Caco-2 (cell line): ENCODE measurements at regions of chr2 and their contacts with region 1.

Region 1: DNA sequence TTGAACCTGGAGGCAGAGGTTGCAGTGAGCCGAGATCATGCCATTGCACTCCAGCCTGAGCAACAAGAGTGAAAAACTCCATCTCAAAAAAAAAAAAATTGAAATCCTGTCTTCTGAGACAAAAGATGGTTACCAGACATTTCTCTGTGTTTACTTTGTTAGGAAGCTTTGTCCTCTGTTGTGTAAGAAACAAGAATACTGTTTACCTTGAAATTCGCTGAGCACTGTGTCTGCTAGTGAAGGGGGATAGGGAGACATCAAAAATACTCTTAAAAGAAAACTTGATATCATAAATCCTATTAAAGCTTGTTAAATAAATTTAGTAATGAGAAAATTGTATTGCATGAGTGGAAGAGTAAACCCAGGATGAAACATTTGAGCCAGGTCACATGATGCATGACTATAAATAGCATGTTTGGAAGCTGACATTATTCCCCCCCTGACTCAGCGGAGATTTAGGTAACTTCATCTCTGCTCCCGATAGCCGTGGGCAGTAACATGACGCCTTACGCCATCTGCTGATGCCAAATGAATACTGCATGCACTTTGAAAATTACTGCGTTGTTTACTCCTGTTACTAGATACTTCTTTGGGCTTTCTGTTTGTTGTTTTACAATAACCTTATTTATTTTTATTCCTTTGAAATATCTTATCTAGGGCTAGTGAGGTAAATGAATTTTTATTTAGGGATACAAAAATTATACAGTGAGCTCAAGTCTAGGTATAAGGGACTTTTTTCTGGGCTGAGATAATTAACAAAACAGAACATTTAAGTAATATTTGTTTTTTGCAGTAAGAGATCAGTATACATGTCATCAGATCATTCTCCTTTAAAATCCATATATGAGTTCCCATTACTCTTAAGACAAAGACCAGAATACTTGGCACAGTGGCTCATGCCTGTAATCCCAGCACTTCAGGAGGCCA is 134.9 kb downstream of the MAP3K20 start:
- DNase-seq: peak; percentile 64 to 72
- H3K4me3 ChIP-seq: no peak overlapping the region
- H3K4me3 Mint-ChIP-seq: no peak overlapping the region
- H3K27ac Mint-ChIP-seq: no peak overlapping the region
- H3K4me1 ChIP-seq: no peaks in the 10 kb centered on the region; the same call in 1 of the 2 replicates
- H3K4me1 Mint-ChIP-seq: no peaks in the 10 kb centered on the region
- H3K27me3 ChIP-seq: no peaks in the 10 kb centered on the region
- H3K27me3 Mint-ChIP-seq: no peaks in the 10 kb centered on the region
- CTCF ChIP-seq: peak; percentile 81 to 91

Region 2: DNA sequence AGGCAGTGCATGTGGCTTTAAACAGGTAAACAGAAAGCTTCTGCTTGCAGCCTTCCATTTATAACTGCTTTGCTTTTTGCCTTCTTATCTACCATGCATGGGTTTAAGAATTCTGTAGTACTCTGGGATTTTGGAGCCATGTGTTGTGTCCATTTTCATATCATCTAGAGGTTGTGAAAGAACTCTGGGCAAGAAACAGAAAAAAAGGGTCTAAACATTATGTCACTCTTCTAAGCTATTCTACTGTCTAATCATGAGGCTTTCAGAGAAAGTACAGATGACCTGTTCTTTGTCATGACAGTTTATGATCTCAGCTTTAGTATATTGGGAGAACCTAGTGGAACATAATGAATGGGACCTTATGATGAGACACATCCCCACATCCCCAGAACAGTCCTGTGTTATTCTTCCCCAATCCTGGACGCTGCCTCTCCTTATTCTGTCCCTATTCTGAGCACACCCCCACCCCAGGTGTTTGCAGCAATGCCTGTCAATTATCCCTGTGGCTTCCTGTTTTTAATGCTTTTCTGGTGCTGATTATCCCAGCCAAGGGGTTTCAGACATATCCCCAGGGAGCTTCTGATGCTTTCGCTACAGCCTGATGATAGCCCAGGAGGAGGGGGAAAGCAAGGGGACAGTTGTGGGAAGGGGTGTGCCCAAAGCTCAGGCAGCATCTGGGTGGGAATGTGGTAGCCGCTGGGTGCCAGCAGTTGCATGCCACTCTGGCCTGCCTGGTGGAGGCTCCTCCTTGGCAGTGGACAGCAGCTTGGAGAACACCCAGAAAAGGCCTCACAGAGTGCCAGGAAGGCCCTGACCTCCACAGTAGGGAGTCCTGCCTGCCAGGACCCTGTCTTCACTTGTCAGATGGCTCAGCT is 304.4 kb before region 1 on chr2:
- CTCF ChIA-PET with region 1: no interaction called
- POLR2A ChIA-PET with region 1: no interaction called
- intact Hi-C with region 1: no loop called
- DNase-seq: no peak
- H3K4me3 ChIP-seq: no peak overlapping the region
- H3K4me3 Mint-ChIP-seq: no peak overlapping the region
- H3K27ac Mint-ChIP-seq: no peak overlapping the region
- H3K4me1 ChIP-seq: no peaks in the 10 kb centered on the region
- H3K4me1 Mint-ChIP-seq: no peaks in the 10 kb centered on the region
- H3K27me3 ChIP-seq: no peaks in the 10 kb centered on the region; the same call in 1 of the 2 replicates
- H3K27me3 Mint-ChIP-seq: peaks cover 9% of the 10 kb centered on the region
- CTCF ChIP-seq: no peak

Region 3: GRCh38 chr2:172972005-172972619 is 238.4 kb before region 1 on chr2:
- CTCF ChIA-PET with region 1: no interaction called
- POLR2A ChIA-PET with region 1: no interaction called
- intact Hi-C with region 1: loop called (anchors 2 kb)
- DNase-seq: peak; percentile 46 to 63
- H3K4me3 ChIP-seq: no peak overlapping the region
- H3K4me3 Mint-ChIP-seq: no peak overlapping the region
- H3K27ac Mint-ChIP-seq: no peak overlapping the region
- H3K4me1 ChIP-seq: 0 out of 2 replicates have a peak, but pooled peaks cover 3% of the 10 kb centered on the region
- H3K4me1 Mint-ChIP-seq: peaks cover 7% of the 10 kb centered on the region
- H3K27me3 ChIP-seq: no peaks in the 10 kb centered on the region
- H3K27me3 Mint-ChIP-seq: no peaks in the 10 kb centered on the region
- CTCF ChIP-seq: peak; percentile 88 to 89

Region 4: DNA sequence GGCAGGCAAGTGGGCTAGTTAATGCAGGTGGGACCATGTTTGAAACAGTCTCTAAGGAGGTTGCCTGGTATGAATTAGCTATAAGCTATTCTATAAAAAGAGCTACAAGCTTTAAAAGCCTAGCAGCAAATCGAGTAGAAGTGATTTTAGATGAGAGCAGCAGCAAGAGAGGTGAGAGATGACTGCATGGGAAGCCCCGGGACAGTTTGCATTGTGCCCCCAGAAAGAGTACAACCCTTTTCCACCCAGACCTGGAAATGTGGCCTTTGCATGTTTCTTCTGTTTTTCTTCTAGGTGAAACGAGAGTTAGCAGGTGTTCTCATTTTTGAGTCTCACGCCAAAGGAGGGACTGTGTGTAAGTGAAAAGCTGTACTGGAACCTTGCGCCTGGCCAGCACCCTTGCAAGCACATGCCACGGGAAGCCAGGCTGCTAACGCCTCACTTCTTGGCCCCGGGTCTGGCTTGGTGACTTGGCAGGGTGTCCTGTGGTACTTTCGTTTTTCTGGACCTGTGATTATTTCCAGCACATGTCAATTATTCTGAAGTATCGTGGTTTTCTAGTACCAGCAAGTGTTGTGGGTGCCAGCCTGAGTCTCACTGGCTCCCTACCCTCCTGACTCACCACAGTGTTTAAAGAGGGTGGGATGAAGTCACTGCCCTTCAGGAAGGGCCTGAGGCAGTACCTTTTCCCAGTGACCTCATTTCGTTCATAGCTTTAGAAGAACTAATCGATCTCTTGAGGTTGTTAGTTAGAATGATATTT is 225.2 kb before region 1 on chr2:
- CTCF ChIA-PET with region 1: no interaction called
- POLR2A ChIA-PET with region 1: no interaction called
- intact Hi-C with region 1: no loop called
- DNase-seq: no peak
- H3K4me3 ChIP-seq: no peak overlapping the region
- H3K4me3 Mint-ChIP-seq: no peak overlapping the region
- H3K27ac Mint-ChIP-seq: no peak overlapping the region
- H3K4me1 ChIP-seq: no peaks in the 10 kb centered on the region
- H3K4me1 Mint-ChIP-seq: no peaks in the 10 kb centered on the region
- H3K27me3 ChIP-seq: no peaks in the 10 kb centered on the region
- H3K27me3 Mint-ChIP-seq: peaks cover 3% of the 10 kb centered on the region
- CTCF ChIP-seq: no peak

Region 5: DNA sequence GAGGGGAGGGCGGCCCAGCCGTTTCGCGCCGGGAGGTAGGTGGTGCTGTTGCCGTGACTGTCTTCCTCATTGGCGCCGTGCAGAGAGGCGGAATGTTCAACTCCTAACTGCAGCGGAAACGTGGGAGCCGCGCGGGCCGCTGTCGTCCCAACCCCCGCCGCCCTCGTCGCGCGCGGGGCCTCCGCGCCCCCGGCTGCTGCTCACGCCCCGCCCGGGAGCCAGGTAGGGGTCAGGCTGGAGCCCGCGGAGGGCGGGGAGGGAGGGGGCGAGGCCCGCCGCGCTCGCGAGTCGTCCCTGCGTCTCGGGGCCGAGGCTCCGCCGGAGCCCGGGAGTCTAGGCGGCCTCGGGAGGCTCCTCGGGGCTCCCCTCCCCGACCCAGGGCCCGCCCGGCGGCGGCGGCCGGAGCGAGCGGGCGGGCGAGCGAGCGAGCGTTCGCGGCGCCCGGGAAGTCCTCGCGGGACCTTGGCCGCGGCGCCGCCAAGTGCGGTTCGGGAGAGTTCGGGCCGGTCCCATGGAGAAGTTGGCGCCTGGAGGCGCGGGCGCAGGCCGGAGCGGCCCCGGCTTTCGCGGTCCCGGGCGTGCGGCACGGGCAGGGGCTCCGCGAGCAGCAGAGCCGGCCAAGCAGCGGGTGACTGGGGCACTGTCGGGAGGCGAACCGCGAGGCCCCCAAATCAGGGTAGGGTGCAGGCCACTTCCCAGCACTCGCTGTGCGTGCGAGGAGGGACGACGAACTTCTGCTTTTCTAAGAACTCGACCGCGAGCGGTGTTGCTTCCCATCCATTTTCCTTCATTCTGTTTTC is 134.6 kb before region 1 on chr2 and contains the start of gene MAP3K20:
- CTCF ChIA-PET with region 1: no interaction called
- POLR2A ChIA-PET with region 1: no interaction called
- intact Hi-C with region 1: loop called (anchors 1 kb)
- DNase-seq: peak; percentile 68 to 79
- H3K4me3 ChIP-seq: peak within 1 kb of the TSS; percentile 93
- H3K4me3 Mint-ChIP-seq: peak within 1 kb of the TSS; percentile 72
- H3K27ac Mint-ChIP-seq: peak within 1 kb of the TSS; percentile 58
- H3K4me1 ChIP-seq: peaks cover 9% of the 10 kb centered on the region
- H3K4me1 Mint-ChIP-seq: peaks cover 18% of the 10 kb centered on the region
- H3K27me3 ChIP-seq: no peaks in the 10 kb centered on the region
- H3K27me3 Mint-ChIP-seq: no peaks in the 10 kb centered on the region
- CTCF ChIP-seq: peak; percentile 22 to 46
- total RNA-seq, gene MAP3K20: 41.5 and 44.5 TPM in 2 replicates

Region 6: DNA sequence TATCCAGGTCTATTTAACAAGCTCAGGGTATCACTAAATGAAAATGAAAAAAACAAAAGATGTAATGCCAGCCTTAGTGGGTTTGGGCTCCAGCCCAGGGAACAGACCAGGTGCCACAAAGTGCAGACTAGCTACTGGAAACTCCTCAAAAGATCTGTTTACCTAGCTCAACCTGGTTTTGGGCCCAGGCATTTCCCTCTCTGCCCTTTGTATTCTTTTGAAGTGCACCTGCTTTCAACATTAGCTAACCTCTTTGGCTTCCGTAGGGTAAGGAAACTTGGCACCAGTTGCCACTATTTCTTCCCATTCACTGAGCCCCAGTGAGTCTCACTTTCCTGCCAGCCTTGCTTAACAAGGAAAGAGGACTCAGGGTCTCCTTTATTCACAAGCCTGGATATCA is 20.5 kb after region 1 on chr2:
- CTCF ChIA-PET with region 1: no interaction called
- POLR2A ChIA-PET with region 1: no interaction called
- intact Hi-C with region 1: no loop called
- DNase-seq: no peak
- H3K4me3 ChIP-seq: no peak overlapping the region
- H3K4me3 Mint-ChIP-seq: no peak overlapping the region
- H3K27ac Mint-ChIP-seq: no peak overlapping the region
- H3K4me1 ChIP-seq: no peaks in the 10 kb centered on the region
- H3K4me1 Mint-ChIP-seq: no peaks in the 10 kb centered on the region
- H3K27me3 ChIP-seq: no peaks in the 10 kb centered on the region
- H3K27me3 Mint-ChIP-seq: no peaks in the 10 kb centered on the region
- CTCF ChIP-seq: no peak

Region 7: DNA sequence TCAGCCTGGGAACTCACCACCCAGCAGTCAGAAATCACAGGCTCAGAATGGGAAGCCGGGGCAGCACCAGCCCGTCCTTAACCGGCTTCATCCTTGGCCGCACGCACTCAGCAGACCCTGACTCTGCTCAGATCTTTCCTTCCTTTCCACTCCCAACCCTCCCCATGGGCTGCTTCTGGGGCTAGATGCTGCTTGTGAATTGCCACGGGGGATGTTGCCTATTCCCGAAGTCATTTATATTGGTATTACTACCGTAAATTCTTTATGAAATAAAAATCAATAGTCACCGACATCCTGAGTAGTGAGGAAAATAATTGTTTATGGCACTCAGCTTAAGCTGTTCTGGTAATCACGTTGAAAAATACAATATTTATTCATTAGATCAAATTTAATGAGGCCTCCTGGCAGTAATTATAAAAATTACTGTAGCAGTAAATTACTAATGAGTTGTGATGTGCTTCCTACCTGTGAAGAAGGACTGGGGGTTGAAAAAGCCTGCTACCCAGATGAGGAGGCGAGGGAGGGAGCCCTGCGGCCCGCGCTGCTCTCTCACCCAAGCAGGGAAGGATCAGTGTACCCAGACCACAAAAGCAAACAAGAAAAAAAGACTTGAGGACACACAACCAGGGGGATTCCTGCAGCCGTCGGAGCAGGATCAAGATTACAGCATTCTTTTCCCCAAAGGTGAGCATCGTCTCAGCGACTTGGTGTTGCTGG is 175.6 kb after region 1 on chr2:
- CTCF ChIA-PET with region 1: no interaction called
- POLR2A ChIA-PET with region 1: no interaction called
- intact Hi-C with region 1: no loop called
- DNase-seq: no peak
- H3K4me3 ChIP-seq: no peak overlapping the region
- H3K4me3 Mint-ChIP-seq: no peak overlapping the region
- H3K27ac Mint-ChIP-seq: no peak overlapping the region
- H3K4me1 ChIP-seq: no peaks in the 10 kb centered on the region
- H3K4me1 Mint-ChIP-seq: no peaks in the 10 kb centered on the region
- H3K27me3 ChIP-seq: no peaks in the 10 kb centered on the region
- H3K27me3 Mint-ChIP-seq: no peaks in the 10 kb centered on the region
- CTCF ChIP-seq: no peak